GM12878 (cell line): ENCODE measurements at regions of chr10 and their contacts with region 1.

Region 1: DNA sequence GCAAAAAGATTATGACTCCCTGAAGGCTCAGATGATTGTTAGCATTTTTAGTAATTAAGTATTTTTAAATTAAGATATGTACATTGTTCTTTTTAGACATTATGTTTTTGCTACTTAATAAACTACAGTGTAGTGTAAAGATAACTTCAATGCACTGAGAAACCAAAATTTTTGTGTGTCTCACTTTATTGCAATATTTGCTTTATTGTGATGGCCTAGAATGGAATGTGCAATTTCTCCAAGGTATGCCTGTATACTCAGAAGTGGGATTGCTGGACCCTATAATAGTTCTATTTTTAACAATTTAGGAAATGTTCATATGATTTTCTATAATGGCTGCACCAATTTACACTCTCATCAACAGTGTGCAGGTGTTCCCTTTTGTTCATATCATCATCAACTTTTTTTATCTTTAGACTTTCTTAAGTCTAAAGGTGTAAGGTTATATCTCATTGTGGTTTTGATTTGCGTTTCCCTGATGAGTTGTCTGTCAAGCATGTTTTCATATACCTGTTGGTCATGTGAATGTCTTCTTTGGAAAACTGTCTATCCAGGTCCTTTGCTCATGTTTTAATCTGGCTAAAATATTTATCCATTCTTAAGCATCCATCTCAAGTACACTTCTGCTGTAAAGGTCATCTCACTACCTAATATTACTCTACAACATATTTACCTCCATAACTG is 1323.5 kb upstream of the LRRTM3 start:
- DNase-seq: no peak
- ATAC-seq: no peak
- H3K4me3 ChIP-seq: no peak overlapping the region
- H3K27ac ChIP-seq: no peak overlapping the region
- H3K4me1 ChIP-seq: no peaks in the 10 kb centered on the region
- H3K27me3 ChIP-seq: no peaks in the 10 kb centered on the region
- CTCF ChIP-seq: no peak
- EP300 ChIP-seq: no peak
- POLR2A ChIP-seq: no peak
- RAD21 ChIP-seq: no peak

Region 2: DNA sequence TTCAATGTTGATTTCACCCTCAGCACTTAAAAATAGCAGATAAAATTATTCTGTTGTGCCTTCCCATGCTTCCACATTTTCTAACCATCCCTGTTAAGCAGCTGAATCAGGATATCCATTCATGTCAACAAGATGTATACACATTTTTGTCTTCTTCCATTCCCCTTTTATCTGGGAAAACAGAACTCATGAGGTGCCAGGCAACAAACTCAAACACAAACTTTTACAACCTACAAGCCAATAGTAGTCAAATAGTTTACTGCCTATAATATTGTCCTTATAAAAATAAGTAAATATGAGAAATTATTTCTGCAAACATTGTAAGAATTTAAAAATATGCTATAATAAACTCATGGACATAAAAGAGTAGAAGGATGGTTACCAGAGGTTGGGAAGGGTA is 511.3 kb before region 1 on chr10:
- CTCF ChIA-PET with region 1: no interaction called
- POLR2A ChIA-PET with region 1: interaction called, 10 read pairs
- RAD21 ChIA-PET with region 1: no interaction called
- SMC1A ChIA-PET with region 1: no interaction called
- in situ Hi-C with region 1: no loop called
- intact Hi-C with region 1: no loop called
- DNase-seq: no peak
- ATAC-seq: no peak
- H3K4me3 ChIP-seq: no peak overlapping the region
- H3K27ac ChIP-seq: no peak overlapping the region
- H3K4me1 ChIP-seq: no peaks in the 10 kb centered on the region
- H3K27me3 ChIP-seq: no peaks in the 10 kb centered on the region
- CTCF ChIP-seq: no peak
- EP300 ChIP-seq: no peak
- POLR2A ChIP-seq: no peak
- RAD21 ChIP-seq: no peak